SK-N-SH (cell line): ENCODE measurements at regions of chr3 and their contacts with region 1.

Region 1: DNA sequence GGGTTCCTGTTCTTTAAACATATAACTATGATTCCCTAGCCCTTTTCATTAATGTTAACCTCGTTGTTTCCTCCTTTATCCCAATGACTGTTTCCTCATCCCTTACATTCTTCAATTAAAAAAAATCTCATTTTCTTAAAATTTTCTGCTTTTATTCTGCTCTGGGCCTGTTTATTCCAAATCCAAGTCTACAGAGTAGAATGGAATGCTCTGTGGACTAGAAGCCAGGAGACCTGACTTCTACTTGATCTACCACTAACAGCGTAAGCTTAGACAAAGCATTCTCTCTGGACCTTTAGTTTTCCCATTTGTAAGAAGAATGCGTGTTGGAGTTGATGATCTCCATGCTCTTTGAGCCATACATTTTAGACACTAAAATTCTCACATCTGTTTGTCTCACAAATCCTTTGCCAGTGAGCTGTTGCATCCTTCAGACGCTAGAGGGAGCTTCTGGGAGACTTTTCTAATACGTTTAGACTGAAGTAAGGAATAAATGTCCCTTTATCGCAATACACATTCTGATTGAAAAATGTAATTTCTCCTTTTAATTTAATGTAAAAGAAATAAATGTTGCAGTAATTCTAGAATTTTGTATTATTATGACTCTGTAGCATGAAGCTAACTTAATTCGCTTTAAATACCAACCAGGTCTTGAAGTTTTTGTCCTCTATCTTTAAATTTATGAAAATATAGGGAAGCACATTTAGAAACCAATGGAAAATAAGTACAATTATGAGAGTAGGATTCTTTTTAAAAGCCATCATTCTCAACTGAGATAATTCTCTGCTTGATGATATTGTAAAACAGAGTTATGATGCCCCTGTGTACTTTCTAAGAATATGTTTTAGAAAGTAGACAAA is 21.7 kb upstream of the GMNC start:
- DNase-seq: peak; percentile 36
- H3K4me3 ChIP-seq: peak overlapping the region in 1 of 2 experiments; percentile 47; a peak in 1 of 4 replicates
- H3K27ac ChIP-seq: no peak overlapping the region
- H3K4me1 ChIP-seq: no peaks in the 10 kb centered on the region; a peak in 1 of 4 replicates
- H3K27me3 ChIP-seq: no peaks in the 10 kb centered on the region
- CTCF ChIP-seq: peak; percentile 98
- EP300 ChIP-seq: no peak
- RAD21 ChIP-seq: peak; percentile 61

Region 2: DNA sequence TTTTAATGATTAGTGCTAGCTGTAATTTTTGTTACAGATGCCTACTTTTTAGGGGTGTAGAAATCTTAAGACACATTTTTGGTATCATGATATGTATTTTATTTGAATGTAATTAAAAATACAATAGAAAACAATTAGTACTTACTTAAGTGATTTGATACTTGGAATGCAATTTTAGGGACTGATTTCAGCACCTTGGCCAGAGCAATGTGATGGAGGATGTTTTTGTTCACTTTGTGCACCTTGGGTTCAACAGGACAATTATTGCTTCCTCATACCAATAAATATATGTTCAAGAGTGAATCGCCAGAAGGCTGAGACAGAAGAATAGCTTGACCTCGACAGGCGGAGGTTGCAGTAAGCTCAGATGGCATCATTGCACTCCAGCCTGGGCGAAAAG is 44.1 kb before region 1 on chr3:
- CTCF ChIA-PET with region 1: no interaction called
- POLR2A ChIA-PET with region 1: no interaction called
- DNase-seq: no peak
- H3K4me3 ChIP-seq: no peak overlapping the region
- H3K27ac ChIP-seq: no peak overlapping the region
- H3K4me1 ChIP-seq: no peaks in the 10 kb centered on the region
- H3K27me3 ChIP-seq: no peaks in the 10 kb centered on the region
- CTCF ChIP-seq: no peak
- EP300 ChIP-seq: no peak
- RAD21 ChIP-seq: no peak

Region 3: GRCh38 chr3:191005790-191006189 is 121.6 kb after region 1 on chr3:
- CTCF ChIA-PET with region 1: no interaction called
- POLR2A ChIA-PET with region 1: no interaction called
- DNase-seq: no peak
- H3K4me3 ChIP-seq: no peak overlapping the region
- H3K27ac ChIP-seq: no peak overlapping the region
- H3K4me1 ChIP-seq: no peaks in the 10 kb centered on the region; a peak in 1 of 4 replicates
- H3K27me3 ChIP-seq: no peaks in the 10 kb centered on the region
- CTCF ChIP-seq: no peak
- EP300 ChIP-seq: no peak
- RAD21 ChIP-seq: no peak

Region 4: DNA sequence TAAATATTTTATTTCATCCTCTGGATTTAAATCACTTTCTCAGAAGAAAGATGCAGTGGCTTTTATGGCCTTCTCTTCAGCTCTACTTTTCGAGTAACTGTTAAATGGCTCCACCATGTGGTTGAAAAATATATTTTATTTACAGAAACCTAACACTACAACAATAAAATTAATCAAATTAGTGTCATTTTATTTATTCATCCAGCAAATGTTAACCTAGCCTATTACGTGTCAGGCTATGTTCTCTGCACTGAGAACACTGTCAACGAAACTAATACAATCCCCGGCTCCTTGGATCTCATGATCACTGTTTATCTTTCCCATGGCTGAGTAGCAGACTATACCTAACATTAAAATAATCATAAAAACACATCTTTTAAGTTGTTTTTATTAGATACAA is 166.8 kb after region 1 on chr3:
- CTCF ChIA-PET with region 1: interaction called, 50 read pairs
- POLR2A ChIA-PET with region 1: no interaction called
- DNase-seq: peak; percentile 4
- H3K4me3 ChIP-seq: no peak overlapping the region; a peak in 1 of 4 replicates
- H3K27ac ChIP-seq: no peak overlapping the region
- H3K4me1 ChIP-seq: no peaks in the 10 kb centered on the region
- H3K27me3 ChIP-seq: no peaks in the 10 kb centered on the region; the same call in 1 of the 2 replicates
- CTCF ChIP-seq: peak; percentile 65
- EP300 ChIP-seq: no peak
- RAD21 ChIP-seq: peak; percentile 66